Sciatic nerve (tissue), 2 donors: ENCODE measurements at regions of chr2 and their contacts with region 1.

Region 1: GRCh38 chr2:127064642-127065250 is 42.2 kb downstream of the BIN1 start:
- DNase-seq: peak; percentile 93
- ATAC-seq: peak; percentile 89

Region 2: GRCh38 chr2:127096718-127097470 is 32.1 kb after region 1 on chr2:
- intact Hi-C with region 1: no loop called
- DNase-seq: peak; percentile 55
- ATAC-seq: no peak

Region 3: GRCh38 chr2:127106951-127107621 is 42.3 kb after region 1 on chr2 and contains the start of gene BIN1:
- intact Hi-C with region 1: loop called (anchors 5 kb)
- DNase-seq: peak; percentile 90
- ATAC-seq: peak; percentile 89
- total RNA-seq, gene BIN1: 62.8 TPM

Region 4: DNA sequence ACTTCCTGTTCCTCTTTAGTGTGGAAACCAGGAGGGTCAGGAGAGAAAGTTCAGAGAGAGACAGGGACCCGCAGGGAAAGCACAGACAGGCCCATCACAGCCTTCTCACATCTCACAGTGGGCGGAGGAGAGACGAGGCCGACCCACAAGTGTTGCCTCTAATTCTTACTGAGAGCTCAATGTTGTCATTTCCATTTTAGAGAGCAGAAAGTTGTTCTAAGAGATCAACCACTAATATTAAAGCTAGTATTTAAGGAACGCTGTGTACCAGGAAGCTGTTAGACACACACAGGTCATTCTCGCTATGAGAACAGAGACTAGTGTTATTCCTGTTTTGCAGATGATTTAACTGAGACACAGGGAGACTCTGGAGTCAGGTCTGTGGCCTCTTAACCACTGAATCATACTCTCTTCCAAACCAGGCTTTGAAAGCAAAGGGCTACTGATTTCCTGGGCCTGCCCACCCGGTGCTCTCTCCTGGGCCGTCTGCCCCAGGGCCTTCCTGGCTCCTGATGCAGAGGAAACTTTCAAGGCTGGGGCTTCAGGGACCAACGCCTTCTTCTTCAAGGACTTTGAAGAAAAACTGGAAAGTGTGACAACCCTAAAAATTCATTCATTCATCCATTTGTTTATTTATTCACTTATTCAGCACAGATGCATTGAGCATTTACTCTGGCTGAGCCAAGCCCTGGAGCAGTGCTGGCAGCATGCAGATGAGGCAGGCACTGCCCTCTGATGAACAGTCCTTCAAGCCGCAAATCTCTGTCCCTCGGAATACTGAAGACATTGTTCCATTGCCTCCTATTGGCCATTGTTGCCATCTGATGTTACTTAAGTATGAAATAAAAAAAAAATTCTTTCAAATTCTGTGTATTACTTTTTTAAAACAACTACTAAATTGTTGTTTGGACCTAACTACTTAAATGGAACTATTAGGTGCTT is 79.4 kb after region 1 on chr2:
- intact Hi-C with region 1: loop called (anchors 10 kb)
- DNase-seq: no peak
- ATAC-seq: peak; percentile 87